ENCODE measurements at regions of chr17 and their contacts with region 1.

Region 1: DNA sequence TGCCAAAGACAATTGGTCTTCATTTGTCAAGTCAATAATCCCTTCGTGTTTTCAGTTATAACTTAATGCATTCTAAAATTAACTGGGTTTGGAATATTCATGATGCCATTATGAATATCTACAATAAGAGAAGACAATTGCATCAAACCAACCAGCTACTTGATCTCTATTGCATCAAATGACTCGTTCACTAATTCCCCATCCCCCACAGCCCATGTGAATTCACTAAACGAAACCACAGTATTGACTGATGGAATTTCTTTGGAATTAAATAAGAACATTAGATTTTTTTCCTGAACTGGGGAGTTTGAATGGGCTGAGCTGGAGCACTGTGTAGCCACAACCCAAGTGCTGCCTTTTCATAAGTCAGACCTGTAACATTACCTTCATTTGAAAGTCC is 65.3 kb downstream of the HS3ST3B1 start:
- DNase-seq: no peak
- H3K4me3 ChIP-seq: no peak overlapping the region
- H3K27ac ChIP-seq: no peak overlapping the region
- H3K4me1 ChIP-seq: no peaks in the 10 kb centered on the region
- H3K27me3 ChIP-seq: no peaks in the 10 kb centered on the region
- CTCF ChIP-seq: no peak

Region 2: DNA sequence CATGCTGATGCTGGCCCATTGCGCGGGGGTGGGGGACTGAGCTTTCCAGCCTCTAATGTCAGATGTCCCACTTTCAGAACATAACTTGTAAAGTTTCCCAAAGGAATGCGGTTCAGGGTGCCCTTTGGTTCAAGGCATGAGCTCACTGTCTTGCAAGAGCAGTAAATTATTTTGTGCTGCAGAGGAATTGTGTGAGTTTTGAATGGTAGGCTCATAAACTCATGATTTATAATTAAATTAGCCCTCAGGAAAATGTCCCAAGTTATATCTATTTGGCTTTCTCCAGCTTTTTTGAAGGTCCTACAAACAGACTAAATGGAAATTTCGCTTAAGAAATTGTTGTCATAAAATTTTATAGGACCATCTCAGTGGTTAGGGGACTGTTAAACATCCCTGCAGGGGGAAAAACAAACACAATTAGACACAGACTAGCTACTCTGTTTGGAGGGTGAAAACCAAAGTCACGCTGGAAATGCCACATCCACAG is 256.5 kb after region 1 on chr17:
- CTCF ChIA-PET with region 1: interaction called, 13 read pairs
- dilution Hi-C with region 1: no loop called
- in situ Hi-C with region 1: no loop called
- intact Hi-C with region 1: no loop called
- DNase-seq: peak; percentile 69
- H3K4me3 ChIP-seq: no peak overlapping the region
- H3K27ac ChIP-seq: no peak overlapping the region
- H3K4me1 ChIP-seq: peaks cover 25% of the 10 kb centered on the region
- H3K27me3 ChIP-seq: no peaks in the 10 kb centered on the region
- CTCF ChIP-seq: no peak

Measured in mammary epithelial cell (primary cell).